Colonic mucosa (tissue), 4 donors: ENCODE measurements at regions of chr11 and their contacts with region 1.

Region 1: GRCh38 chr11:44727373-44728287 is 868 bp downstream of the TSPAN18 start:
- DNase-seq: peak; percentile 75
- H3K4me3 ChIP-seq: peak overlapping the region; percentile 54
- H3K27ac ChIP-seq: no peak overlapping the region
- H3K4me1 ChIP-seq: no peaks in the 10 kb centered on the region
- H3K27me3 ChIP-seq: peaks cover 4% of the 10 kb centered on the region
- CTCF ChIP-seq: peak; percentile 93

Region 2: DNA sequence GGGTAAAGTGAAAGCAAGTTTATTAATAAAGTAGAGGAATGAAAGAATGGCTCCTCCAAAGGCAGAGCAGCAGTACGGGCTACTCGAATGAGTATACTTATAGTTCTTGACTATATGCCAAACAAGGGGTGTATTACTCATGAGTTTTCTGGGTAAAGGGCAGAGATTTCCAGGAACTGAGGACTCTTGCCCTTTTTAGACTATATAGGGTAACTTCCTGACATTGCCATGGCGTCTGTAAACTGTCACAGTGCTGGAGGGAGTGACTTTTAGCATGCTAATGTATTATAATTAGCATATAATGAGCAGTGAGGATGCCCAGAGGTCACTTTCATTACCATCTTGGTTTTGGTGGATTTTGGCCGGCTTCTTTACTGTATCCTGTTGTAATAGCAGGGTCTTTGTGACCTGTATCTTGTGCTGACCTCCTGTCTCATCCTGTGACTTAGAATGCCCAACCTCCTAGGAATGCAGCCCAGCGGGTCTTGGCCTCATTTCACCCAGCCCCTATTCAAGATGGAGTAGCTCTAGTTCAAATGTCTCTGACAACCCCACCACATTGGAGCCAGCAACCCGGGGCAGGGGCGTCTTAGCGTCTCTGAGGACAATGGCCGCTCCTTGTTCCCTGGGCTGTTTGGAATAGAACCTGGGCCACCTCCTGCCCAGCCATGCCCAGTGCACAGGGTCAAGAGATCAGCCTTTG is 197.1 kb before region 1 on chr11:
- intact Hi-C with region 1: no loop called
- DNase-seq: no peak
- H3K4me3 ChIP-seq: no peak overlapping the region
- H3K27ac ChIP-seq: no peak overlapping the region
- H3K4me1 ChIP-seq: no peaks in the 10 kb centered on the region
- H3K27me3 ChIP-seq: no peaks in the 10 kb centered on the region
- CTCF ChIP-seq: no peak

Region 3: DNA sequence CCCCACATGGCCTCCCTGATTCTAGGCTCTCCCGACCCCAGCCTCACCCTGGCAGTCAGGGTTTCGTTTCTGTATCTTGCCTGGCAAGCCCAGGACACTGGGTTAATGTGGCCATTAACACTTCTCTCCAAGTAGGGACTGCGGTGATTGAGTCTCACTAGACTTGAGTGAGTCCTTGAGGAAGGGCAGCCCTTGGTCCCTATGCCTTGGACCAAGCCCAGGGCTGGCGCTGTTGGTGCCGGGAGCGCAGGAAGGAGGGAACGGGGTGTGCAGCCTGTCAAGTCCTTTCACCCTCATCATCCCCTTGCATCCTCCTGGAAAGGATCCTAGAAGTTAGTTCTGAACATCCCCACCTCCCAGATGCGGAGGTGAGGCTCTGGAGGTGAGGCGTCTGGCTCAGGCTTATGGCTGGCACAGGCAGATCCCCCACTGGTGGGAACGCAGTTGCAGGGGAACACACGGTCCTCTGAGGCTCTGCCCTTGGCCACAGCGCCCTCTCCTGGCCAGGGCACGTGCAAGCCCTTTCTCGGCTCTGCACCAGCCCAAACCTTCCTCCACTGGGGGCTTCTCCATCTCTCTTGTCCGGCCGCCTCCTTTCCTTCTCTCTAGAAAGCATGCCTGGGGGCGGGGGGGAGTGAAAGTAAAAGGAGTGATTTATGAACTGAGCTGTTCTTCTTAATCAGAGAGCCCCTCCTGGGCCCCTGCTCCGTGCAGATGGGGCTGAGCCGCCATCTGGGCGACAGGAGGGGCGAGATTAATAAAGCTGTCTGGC is 166.4 kb after region 1 on chr11:
- intact Hi-C with region 1: loop called (anchors 5 kb)
- DNase-seq: peak; percentile 50
- H3K4me3 ChIP-seq: no peak overlapping the region
- H3K27ac ChIP-seq: peak overlapping the region; percentile 24
- H3K4me1 ChIP-seq: no peaks in the 10 kb centered on the region
- H3K27me3 ChIP-seq: no peaks in the 10 kb centered on the region
- CTCF ChIP-seq: peak; percentile 70

Region 4: DNA sequence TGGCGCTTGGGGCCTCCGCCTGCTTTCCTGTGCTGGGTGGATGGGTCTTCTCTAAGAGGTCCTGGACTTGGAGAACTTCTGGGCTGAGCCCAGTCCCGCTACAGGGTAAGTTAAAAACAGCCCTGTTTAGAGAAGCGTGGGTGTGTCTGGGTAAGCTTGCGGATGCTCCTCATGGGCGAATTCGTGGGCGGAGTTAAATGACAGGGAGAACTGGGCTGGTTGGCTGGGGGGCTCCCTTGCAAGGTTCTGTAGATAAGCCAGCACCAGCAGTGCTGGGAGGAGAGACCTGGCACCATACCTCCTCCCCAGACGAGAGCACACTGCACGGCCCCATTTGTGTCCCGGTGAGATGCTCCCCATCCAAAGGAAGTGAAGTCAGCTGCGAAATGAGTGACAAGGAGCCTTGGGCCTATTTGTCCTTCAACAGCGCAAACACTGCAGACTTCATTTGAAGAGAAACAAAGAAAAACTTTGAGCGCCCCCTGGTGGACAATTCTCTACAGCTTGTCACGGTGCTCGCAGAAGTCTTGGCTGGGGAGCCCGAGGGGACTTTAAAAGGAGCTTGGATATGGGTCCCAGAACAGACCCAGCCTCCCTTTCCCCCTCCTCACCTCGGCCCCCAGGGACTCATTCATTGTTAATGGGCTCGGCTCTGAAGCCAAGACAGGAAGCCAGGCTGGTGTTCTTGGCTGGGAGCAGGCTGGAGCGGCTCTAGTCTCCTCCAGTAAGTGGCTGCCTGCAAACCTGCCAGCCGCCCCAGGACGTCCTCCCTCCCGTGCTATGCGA is 183.6 kb after region 1 on chr11:
- intact Hi-C with region 1: loop called (anchors 2 kb)
- DNase-seq: peak; percentile 91
- H3K4me3 ChIP-seq: no peak overlapping the region
- H3K27ac ChIP-seq: no peak overlapping the region
- H3K4me1 ChIP-seq: no peaks in the 10 kb centered on the region
- H3K27me3 ChIP-seq: no peaks in the 10 kb centered on the region
- CTCF ChIP-seq: peak; percentile 80

Region 5: GRCh38 chr11:45233121-45233803 is 505.6 kb after region 1 on chr11:
- intact Hi-C with region 1: no loop called
- DNase-seq: peak; percentile 71
- H3K4me3 ChIP-seq: no peak overlapping the region
- H3K27ac ChIP-seq: no peak overlapping the region
- H3K4me1 ChIP-seq: no peaks in the 10 kb centered on the region
- H3K27me3 ChIP-seq: no peaks in the 10 kb centered on the region
- CTCF ChIP-seq: peak; percentile 82